ENCODE measurements at regions of chr16 and their contacts with region 1.

Region 1: DNA sequence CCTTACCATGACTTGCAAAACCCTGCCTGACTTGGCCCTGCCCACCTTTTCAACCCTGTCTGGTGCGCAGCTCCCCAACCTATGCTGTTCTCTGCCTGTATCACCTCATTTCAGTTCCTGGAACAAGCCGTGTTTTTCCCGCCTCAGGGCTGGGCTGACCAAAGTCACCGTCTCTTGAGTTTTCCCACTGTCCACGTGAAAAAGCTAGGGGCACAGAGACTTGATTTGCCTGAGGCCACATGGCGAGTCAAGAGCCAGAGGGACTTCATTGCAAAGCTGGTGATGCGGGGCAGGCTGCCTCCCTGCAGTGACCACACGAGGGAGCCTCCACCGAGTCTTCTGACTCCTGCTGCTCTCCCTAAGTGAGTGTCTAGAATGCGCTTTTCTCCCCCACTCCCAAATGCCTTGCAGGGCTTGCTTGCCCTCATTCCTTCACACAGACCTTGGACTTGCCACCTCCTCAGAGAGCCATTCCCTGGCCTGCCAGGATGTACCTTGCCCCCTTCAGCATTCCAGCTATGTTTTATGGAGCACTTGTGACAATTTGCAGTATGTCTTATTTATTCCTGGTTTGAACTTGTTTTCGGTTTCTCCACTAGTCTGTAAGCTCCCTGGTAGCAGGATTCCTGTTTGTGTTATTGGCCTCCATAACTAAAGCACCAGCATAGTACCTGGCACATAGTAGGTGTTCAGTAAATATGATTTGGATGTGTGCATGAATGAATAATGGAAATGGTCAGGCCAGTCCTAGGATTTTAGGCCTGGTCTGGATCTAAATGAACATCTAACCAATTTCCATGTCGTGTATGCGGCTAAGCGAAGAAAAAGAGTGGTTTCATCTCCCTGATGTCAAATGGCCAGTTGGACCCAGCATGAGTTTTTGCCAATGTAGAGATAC is 252.3 kb downstream of the SNX29 start:
- DNase-seq: peak; percentile 78
- ATAC-seq: peak; percentile 95
- H3K4me3 Mint-ChIP-seq: no peak overlapping the region
- H3K27ac Mint-ChIP-seq: no peak overlapping the region
- H3K4me1 Mint-ChIP-seq: peaks cover 19% of the 10 kb centered on the region
- H3K27me3 Mint-ChIP-seq: no peaks in the 10 kb centered on the region
- CTCF ChIP-seq: peak; percentile 54; the same call in 1 of the 2 replicates

Region 2: DNA sequence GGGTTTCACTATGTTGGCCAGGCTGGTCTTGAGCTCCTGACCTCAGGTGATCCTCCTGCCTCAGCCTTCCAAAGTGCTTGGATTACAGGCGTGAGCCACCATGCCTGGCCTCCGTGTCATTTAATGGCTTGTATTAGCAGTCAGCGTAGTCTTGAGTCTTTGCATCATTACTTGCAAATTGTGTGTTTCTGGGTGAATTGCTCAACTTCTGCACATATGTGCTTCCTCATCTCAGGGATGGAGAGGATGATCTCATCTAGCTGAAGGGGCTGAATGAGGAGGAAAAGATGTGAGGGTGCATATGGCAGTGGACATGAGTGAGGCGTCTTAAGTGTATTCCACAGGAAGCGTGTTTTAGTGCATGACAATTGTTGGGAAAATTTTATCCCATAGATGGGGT is 96.6 kb before region 1 on chr16:
- CTCF ChIA-PET with region 1: no interaction called
- POLR2A ChIA-PET with region 1: no interaction called
- DNase-seq: no peak
- ATAC-seq: no peak
- H3K4me3 Mint-ChIP-seq: no peak overlapping the region
- H3K27ac Mint-ChIP-seq: no peak overlapping the region
- H3K4me1 Mint-ChIP-seq: no peaks in the 10 kb centered on the region
- H3K27me3 Mint-ChIP-seq: no peaks in the 10 kb centered on the region
- CTCF ChIP-seq: no peak

Region 3: GRCh38 chr16:12168074-12169000 is 60.5 kb before region 1 on chr16:
- CTCF ChIA-PET with region 1: interaction called, 12 read pairs
- POLR2A ChIA-PET with region 1: no interaction called
- DNase-seq: no peak
- ATAC-seq: no peak
- H3K4me3 Mint-ChIP-seq: no peak overlapping the region
- H3K27ac Mint-ChIP-seq: no peak overlapping the region
- H3K4me1 Mint-ChIP-seq: no peaks in the 10 kb centered on the region
- H3K27me3 Mint-ChIP-seq: no peaks in the 10 kb centered on the region
- CTCF ChIP-seq: no peak

Region 4: GRCh38 chr16:12215277-12216105 is 13.4 kb before region 1 on chr16:
- CTCF ChIA-PET with region 1: interaction called, 11 read pairs
- POLR2A ChIA-PET with region 1: no interaction called
- DNase-seq: peak; percentile 61
- ATAC-seq: peak; percentile 92
- H3K4me3 Mint-ChIP-seq: no peak overlapping the region
- H3K27ac Mint-ChIP-seq: no peak overlapping the region
- H3K4me1 Mint-ChIP-seq: peaks cover 30% of the 10 kb centered on the region
- H3K27me3 Mint-ChIP-seq: no peaks in the 10 kb centered on the region
- CTCF ChIP-seq: peak; percentile 52

Region 5: DNA sequence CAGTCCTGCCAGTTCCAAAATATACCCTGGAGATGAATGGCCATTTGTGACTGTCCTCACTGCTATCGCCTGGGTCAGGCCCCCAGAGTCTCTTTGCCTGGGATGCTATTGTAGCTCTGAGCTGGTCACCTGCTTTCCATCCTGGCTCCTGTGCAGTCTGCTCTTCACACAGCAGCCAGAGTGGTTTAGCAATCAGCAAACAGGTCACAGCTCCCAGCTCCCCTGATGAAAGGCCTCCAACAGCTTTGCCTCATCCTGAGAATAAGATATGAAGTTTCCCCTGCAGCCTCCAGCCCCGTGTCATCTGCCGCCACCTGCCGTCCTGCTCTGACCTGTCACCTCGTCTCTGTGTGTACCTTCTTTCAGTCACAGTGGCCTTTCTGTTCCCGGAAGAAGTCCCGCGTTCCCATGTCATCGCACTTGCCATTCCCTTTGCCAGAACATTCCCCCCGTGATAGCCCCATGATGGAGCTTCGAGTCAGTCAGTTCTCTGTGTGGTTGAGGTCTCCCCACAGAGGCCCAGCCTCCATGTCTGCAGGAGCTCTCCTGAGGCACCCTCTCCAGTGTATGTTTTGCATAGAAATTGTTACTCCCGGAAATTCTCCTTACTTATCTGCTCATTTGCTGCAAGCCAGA is 29.2 kb after region 1 on chr16:
- CTCF ChIA-PET with region 1: interaction called, 63 read pairs
- POLR2A ChIA-PET with region 1: no interaction called
- DNase-seq: peak; percentile 32
- ATAC-seq: no peak
- H3K4me3 Mint-ChIP-seq: no peak overlapping the region
- H3K27ac Mint-ChIP-seq: no peak overlapping the region
- H3K4me1 Mint-ChIP-seq: peaks cover 15% of the 10 kb centered on the region
- H3K27me3 Mint-ChIP-seq: no peaks in the 10 kb centered on the region; the same call in 1 of the 2 replicates
- CTCF ChIP-seq: no peak

Region 6: DNA sequence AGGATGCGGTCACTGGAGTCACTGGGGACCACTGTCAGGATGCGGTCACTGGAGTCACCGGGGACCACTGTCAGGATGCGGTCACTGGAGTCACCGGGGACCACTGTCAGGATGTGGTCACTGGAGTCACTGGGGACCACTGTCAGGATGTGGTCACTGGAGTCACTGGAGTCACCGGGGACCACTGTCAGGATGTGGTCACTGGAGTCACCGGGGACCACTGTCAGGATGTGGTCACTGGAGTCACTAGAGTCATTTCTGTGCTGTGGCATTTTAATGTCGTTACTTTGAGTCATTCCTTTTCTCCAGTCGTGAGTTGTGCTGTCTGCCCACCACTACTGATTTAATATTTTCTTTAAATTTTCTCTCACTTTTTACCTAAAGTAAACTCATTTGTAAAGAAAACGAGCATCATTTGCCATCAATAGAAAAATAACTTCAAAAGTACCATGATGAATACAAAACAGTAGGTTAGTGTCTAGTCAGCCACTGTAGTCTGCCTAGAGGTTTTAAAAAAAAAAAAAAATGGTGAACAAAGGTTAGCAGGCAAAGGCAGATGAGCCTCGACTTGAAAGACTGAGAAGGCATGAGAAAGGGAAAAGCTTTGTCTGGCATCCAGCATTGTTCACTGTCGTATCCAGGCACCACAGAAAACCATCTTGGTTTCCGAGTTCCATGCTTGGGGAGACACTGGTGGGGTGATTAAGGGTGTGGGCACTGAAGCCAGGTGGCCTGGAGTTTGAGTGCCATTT is 94.3 kb after region 1 on chr16:
- CTCF ChIA-PET with region 1: no interaction called
- POLR2A ChIA-PET with region 1: no interaction called
- DNase-seq: no peak
- ATAC-seq: no peak
- H3K4me3 Mint-ChIP-seq: no peak overlapping the region
- H3K27ac Mint-ChIP-seq: no peak overlapping the region
- H3K4me1 Mint-ChIP-seq: peaks cover 27% of the 10 kb centered on the region
- H3K27me3 Mint-ChIP-seq: no peaks in the 10 kb centered on the region
- CTCF ChIP-seq: no peak

Region 7: GRCh38 chr16:12436201-12436657 is 207.4 kb after region 1 on chr16:
- CTCF ChIA-PET with region 1: no interaction called
- POLR2A ChIA-PET with region 1: no interaction called
- DNase-seq: peak; percentile 54
- ATAC-seq: peak; percentile 88
- H3K4me3 Mint-ChIP-seq: peak overlapping the region; percentile 55
- H3K27ac Mint-ChIP-seq: no peak overlapping the region
- H3K4me1 Mint-ChIP-seq: peaks cover 22% of the 10 kb centered on the region
- H3K27me3 Mint-ChIP-seq: no peaks in the 10 kb centered on the region
- CTCF ChIP-seq: no peak

Measured in WTC11 (cell line).